ENCODE measurements at regions of chr11 and their contacts with region 1.

Region 1: DNA sequence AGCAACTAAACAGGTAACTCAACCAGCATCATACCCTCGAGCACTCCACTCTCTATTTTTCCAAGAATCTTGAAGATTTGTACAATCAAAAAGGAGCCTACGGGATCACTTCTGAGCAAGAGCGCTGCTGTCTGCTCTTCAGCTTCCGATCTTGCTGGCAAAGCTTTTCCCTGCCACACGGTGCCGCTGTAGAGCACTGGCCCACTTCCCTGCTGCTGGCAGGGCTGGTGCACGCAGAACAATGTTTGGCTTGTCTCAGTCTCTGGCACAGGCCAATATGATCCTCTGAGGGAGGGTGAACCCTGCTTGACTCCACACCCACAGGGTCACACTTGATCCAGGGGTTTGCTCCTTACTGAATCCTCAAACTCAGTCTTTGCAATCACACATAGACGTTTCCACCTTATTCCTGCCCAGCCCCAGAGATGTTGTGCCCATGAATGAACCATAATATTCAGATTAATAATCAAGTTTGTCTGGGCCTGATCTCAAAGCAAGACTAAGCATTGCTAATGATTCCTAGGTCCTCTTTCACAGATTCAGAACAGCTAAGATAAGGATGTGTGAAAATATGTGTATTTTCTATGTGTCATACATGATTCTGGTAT is 536.6 kb downstream of the SOX6 start:
- DNase-seq: peak; percentile 72 to 97 (median 86)

Region 2: DNA sequence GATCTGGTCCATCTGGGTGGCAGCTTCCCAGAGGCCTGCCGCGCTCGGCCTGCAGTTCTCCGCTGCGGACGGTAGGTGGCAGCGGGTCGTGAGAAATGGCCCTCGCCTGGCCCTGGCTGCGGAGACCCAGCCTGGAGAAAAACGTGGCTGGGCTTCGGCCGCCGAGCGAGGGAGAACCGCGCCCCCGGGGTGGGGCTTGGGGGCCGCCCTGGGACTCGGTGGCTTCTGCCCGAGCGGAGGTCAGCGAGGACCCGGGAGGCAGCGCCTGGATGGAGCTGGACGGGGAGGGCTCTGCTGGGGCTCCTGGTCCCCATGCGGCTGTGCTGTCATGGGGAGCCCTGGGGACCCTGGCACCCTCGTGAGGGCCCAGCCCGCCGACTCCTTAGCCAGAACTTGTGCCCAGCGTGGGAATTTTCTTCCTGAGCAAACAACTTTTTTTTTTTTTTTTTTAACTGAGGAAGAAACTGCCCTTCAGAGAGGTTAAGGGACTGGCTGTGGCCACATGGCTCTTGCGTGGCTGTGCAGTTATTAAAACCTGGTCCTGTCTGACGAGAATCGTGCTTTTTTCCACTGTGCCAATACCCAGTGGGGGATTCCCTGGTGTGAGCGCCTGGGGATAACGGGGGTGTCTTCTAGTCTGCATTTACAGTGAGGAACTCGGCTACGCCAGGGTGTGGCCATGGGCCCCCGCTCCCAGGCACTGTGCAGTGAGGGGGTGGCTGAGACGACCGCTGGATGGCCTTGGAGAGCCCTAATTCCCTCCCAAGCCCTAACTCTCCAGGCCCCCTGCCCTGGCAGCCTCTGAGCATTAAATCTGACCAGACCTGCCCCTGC is 169.5 kb before region 1 on chr11:
- intact Hi-C with region 1: loop called (anchors 2 kb)
- DNase-seq: peak; percentile 82 to 98 (median 90)

Region 3: GRCh38 chr11:15865212-15865987 is 45.6 kb after region 1 on chr11:
- intact Hi-C with region 1: no loop called
- DNase-seq: no peak

Region 4: GRCh38 chr11:15969281-15969680 is 149.5 kb after region 1 on chr11:
- intact Hi-C with region 1: no loop called
- DNase-seq: peak in 6 of 10 donors; percentile 27 to 89 (median 34)